Thyroid gland (tissue), 4 donors: ENCODE measurements at regions of chr15 and their contacts with region 1.

Region 1: GRCh38 chr15:88620995-88621772 is at the start of gene AEN:
- DNase-seq: peak; percentile 96 to 97
- H3K4me3 ChIP-seq: peak within 1 kb of the TSS; percentile 50 to 98 (median 92)
- H3K27ac ChIP-seq: peak within 1 kb of the TSS; percentile 34 to 86 (median 82)
- H3K4me1 ChIP-seq: peaks cover 20 to 37% of the 10 kb centered on the region in 2 donors
- H3K27me3 ChIP-seq: no peaks in the 10 kb centered on the region
- CTCF ChIP-seq: no peak
- POLR2A ChIP-seq: peak in 1 of 2 donors; percentile 55
- total RNA-seq, gene AEN: 21.6 to 32.8 (median 27.3) TPM

Region 2: DNA sequence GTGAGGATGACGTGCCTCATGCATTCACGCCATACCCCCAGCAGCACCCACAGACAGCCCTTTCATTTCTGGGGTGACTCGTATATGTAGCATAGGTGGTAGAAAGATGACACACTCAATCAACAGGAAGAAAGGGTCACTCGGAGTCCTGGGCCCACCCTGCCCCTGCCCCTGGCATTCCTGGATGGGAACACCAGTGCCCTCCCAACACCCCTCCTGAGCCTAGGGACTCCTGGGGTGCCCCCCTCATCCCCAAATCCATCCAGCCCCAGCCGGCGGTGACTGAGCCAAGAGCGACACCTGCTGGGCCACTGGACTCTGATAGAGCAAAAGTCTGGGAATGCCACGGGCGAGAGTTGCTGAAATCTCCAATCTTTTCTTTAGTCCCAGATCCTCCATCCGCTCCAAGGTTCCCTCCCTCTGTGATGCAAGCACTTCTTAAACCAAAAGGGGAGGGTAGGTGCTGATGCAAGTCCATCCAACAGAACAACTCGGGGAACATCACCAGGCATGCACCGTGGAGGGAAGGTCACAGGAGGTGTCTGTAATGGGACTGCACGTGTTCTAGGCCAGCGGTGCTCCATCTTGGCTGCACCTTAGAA is 213.1 kb after region 1 on chr15:
- intact Hi-C with region 1: loop called (anchors 10 kb)
- DNase-seq: peak; percentile 26 to 27
- H3K4me3 ChIP-seq: no peak overlapping the region
- H3K27ac ChIP-seq: no peak overlapping the region
- H3K4me1 ChIP-seq: no peaks in the 10 kb centered on the region
- H3K27me3 ChIP-seq: no peaks in the 10 kb centered on the region
- CTCF ChIP-seq: peak in 4 of 6 experiments; percentile 22 to 53 (median 36)
- POLR2A ChIP-seq: no peak

Region 3: GRCh38 chr15:88897456-88898194 is 276.4 kb after region 1 on chr15:
- intact Hi-C with region 1: loop called (anchors 10 kb)
- DNase-seq: peak; percentile 88 to 94
- H3K4me3 ChIP-seq: no peak overlapping the region
- H3K27ac ChIP-seq: peak overlapping the region; percentile 36 to 85 (median 80)
- H3K4me1 ChIP-seq: peaks cover 21 to 35% of the 10 kb centered on the region in 2 donors
- H3K27me3 ChIP-seq: no peaks in the 10 kb centered on the region
- CTCF ChIP-seq: peak; percentile 20 to 74 (median 58)
- POLR2A ChIP-seq: peak in 1 of 2 donors; percentile 22